ENCODE measurements at regions of chr2 and their contacts with region 1.

Region 1: GRCh38 chr2:216404010-216404618 is 8.2 kb upstream of the SMARCAL1 start:
- DNase-seq: peak; percentile 54
- ATAC-seq: peak; percentile 79
- H3K4me3 ChIP-seq: no peak overlapping the region
- H3K27ac ChIP-seq: no peak overlapping the region
- H3K4me1 ChIP-seq: peaks cover 8% of the 10 kb centered on the region
- H3K27me3 ChIP-seq: peaks cover 10 to 38% of the 10 kb centered on the region in 2 experiments; a peak in 4 of 5 replicates
- CTCF ChIP-seq: peak; percentile 69
- EP300 ChIP-seq: no peak
- POLR2A ChIP-seq: no peak
- RAD21 ChIP-seq: no peak; the same call in 1 of the 2 replicates

Region 2: GRCh38 chr2:216114714-216115557 is 289.2 kb before region 1 on chr2:
- CTCF ChIA-PET with region 1: no interaction called
- POLR2A ChIA-PET with region 1: no interaction called
- in situ Hi-C with region 1: no loop called
- intact Hi-C with region 1: loop called (anchors 5 kb)
- DNase-seq: peak; percentile 100
- ATAC-seq: peak; percentile 90
- H3K4me3 ChIP-seq: peak overlapping the region; percentile 55 to 79 (median 69)
- H3K27ac ChIP-seq: peak overlapping the region; percentile 92
- H3K4me1 ChIP-seq: peaks cover 68% of the 10 kb centered on the region
- H3K27me3 ChIP-seq: no peaks in the 10 kb centered on the region; a peak in 1 of 5 replicates
- CTCF ChIP-seq: peak; percentile 94
- EP300 ChIP-seq: peak in 1 of 2 experiments; percentile 43; a peak in 1 of 4 replicates
- POLR2A ChIP-seq: peak; percentile 57 to 58
- RAD21 ChIP-seq: peak; percentile 12; the same call in 1 of the 2 replicates

Region 3: GRCh38 chr2:216222650-216223352 is 181.3 kb before region 1 on chr2:
- CTCF ChIA-PET with region 1: interaction called, 4 read pairs
- POLR2A ChIA-PET with region 1: no interaction called
- in situ Hi-C with region 1: no loop called
- intact Hi-C with region 1: loop called (anchors 5 kb)
- DNase-seq: no peak
- ATAC-seq: no peak
- H3K4me3 ChIP-seq: no peak overlapping the region
- H3K27ac ChIP-seq: no peak overlapping the region
- H3K4me1 ChIP-seq: no peaks in the 10 kb centered on the region
- H3K27me3 ChIP-seq: no peaks in the 10 kb centered on the region; a peak in 1 of 5 replicates
- CTCF ChIP-seq: peak; percentile 48
- EP300 ChIP-seq: no peak
- POLR2A ChIP-seq: no peak
- RAD21 ChIP-seq: no peak

Region 4: GRCh38 chr2:216328347-216328746 is 75.8 kb before region 1 on chr2:
- CTCF ChIA-PET with region 1: no interaction called
- POLR2A ChIA-PET with region 1: no interaction called
- in situ Hi-C with region 1: no loop called
- intact Hi-C with region 1: loop called (anchors 1 kb)
- DNase-seq: peak; percentile 25
- ATAC-seq: peak; percentile 90
- H3K4me3 ChIP-seq: no peak overlapping the region
- H3K27ac ChIP-seq: no peak overlapping the region
- H3K4me1 ChIP-seq: no peaks in the 10 kb centered on the region
- H3K27me3 ChIP-seq: peaks cover 0 to 5% of the 10 kb centered on the region in 2 experiments; a peak in 2 of 5 replicates
- CTCF ChIP-seq: peak; percentile 50
- EP300 ChIP-seq: no peak
- POLR2A ChIP-seq: no peak
- RAD21 ChIP-seq: no peak

Measured in HepG2 (cell line).